ENCODE measurements at regions of chr1 and their contacts with region 1.

Region 1: GRCh38 chr1:248807067-248807737 is 18.5 kb downstream of the SH3BP5L start:
- DNase-seq: peak; percentile 4
- ATAC-seq: peak; percentile 94
- H3K4me3 ChIP-seq: no peak overlapping the region
- H3K27ac ChIP-seq: no peak overlapping the region
- H3K4me1 ChIP-seq: no peaks in the 10 kb centered on the region
- H3K27me3 ChIP-seq: no peaks in the 10 kb centered on the region
- CTCF ChIP-seq: peak; percentile 67 to 84 (median 77)
- POLR2A ChIP-seq: no peak
- RAD21 ChIP-seq: peak; percentile 86

Region 2: GRCh38 chr1:247681288-247681897 is 1125.8 kb before region 1 on chr1:
- CTCF ChIA-PET with region 1: no interaction called
- POLR2A ChIA-PET with region 1: no interaction called
- RAD21 ChIA-PET with region 1: no interaction called
- intact Hi-C with region 1: loop called (anchors 5 kb)
- DNase-seq: peak; percentile 10
- ATAC-seq: peak; percentile 63
- H3K4me3 ChIP-seq: no peak overlapping the region
- H3K27ac ChIP-seq: no peak overlapping the region
- H3K4me1 ChIP-seq: no peaks in the 10 kb centered on the region
- H3K27me3 ChIP-seq: no peaks in the 10 kb centered on the region
- CTCF ChIP-seq: peak; percentile 2 to 73 (median 70); a peak in 4 of 6 replicates
- POLR2A ChIP-seq: no peak
- RAD21 ChIP-seq: peak; percentile 45

Region 3: GRCh38 chr1:248622570-248623001 is 184.6 kb before region 1 on chr1:
- CTCF ChIA-PET with region 1: no interaction called
- POLR2A ChIA-PET with region 1: no interaction called
- RAD21 ChIA-PET with region 1: no interaction called
- intact Hi-C with region 1: loop called (anchors 1 kb)
- DNase-seq: peak; percentile 6
- ATAC-seq: peak; percentile 79
- H3K4me3 ChIP-seq: no peak overlapping the region
- H3K27ac ChIP-seq: no peak overlapping the region
- H3K4me1 ChIP-seq: no peaks in the 10 kb centered on the region
- H3K27me3 ChIP-seq: no peaks in the 10 kb centered on the region
- CTCF ChIP-seq: peak; percentile 38 to 59 (median 52); a peak in 5 of 6 replicates
- POLR2A ChIP-seq: no peak
- RAD21 ChIP-seq: peak; percentile 67

Region 4: GRCh38 chr1:248696261-248696660 is 110.9 kb before region 1 on chr1:
- CTCF ChIA-PET with region 1: no interaction called
- POLR2A ChIA-PET with region 1: no interaction called
- RAD21 ChIA-PET with region 1: no interaction called
- intact Hi-C with region 1: loop called (anchors 1 kb)
- DNase-seq: no peak
- ATAC-seq: peak; percentile 70
- H3K4me3 ChIP-seq: no peak overlapping the region
- H3K27ac ChIP-seq: no peak overlapping the region
- H3K4me1 ChIP-seq: no peaks in the 10 kb centered on the region
- H3K27me3 ChIP-seq: no peaks in the 10 kb centered on the region
- CTCF ChIP-seq: peak; percentile 26 to 31 (median 26); a peak in 2 of 6 replicates
- POLR2A ChIP-seq: no peak
- RAD21 ChIP-seq: peak; percentile 55

Measured in HCT116 (cell line).